ENCODE measurements at regions of chr19 and their contacts with region 1.

Region 1: GRCh38 chr19:18007044-18007916 is 690 bp upstream of the ARRDC2 start:
- DNase-seq: peak in 1 of 2 experiments; percentile 75
- ATAC-seq: peak; percentile 93 to 94
- H3K4me3 ChIP-seq: no peak overlapping the region
- H3K27ac ChIP-seq: peak overlapping the region; percentile 62 to 76; a peak in 5 of 6 replicates
- H3K4me1 ChIP-seq: peaks cover 30% of the 10 kb centered on the region
- CTCF ChIP-seq: peak; percentile 87
- EP300 ChIP-seq: no peak
- POLR2A ChIP-seq: no peak
- RAD21 ChIP-seq: peak; percentile 90

Region 2: GRCh38 chr19:18023622-18024251 is 16.5 kb after region 1 on chr19:
- CTCF ChIA-PET with region 1: interaction called, 11 read pairs
- POLR2A ChIA-PET with region 1: interaction called, 4 read pairs
- DNase-seq: no peak
- ATAC-seq: no peak
- H3K4me3 ChIP-seq: no peak overlapping the region
- H3K27ac ChIP-seq: peak overlapping the region; percentile 37 to 91; a peak in 2 of 6 replicates
- H3K4me1 ChIP-seq: peaks cover 32% of the 10 kb centered on the region
- CTCF ChIP-seq: no peak
- EP300 ChIP-seq: no peak
- POLR2A ChIP-seq: no peak; the same call in 1 of the 2 replicates
- RAD21 ChIP-seq: no peak

Region 3: DNA sequence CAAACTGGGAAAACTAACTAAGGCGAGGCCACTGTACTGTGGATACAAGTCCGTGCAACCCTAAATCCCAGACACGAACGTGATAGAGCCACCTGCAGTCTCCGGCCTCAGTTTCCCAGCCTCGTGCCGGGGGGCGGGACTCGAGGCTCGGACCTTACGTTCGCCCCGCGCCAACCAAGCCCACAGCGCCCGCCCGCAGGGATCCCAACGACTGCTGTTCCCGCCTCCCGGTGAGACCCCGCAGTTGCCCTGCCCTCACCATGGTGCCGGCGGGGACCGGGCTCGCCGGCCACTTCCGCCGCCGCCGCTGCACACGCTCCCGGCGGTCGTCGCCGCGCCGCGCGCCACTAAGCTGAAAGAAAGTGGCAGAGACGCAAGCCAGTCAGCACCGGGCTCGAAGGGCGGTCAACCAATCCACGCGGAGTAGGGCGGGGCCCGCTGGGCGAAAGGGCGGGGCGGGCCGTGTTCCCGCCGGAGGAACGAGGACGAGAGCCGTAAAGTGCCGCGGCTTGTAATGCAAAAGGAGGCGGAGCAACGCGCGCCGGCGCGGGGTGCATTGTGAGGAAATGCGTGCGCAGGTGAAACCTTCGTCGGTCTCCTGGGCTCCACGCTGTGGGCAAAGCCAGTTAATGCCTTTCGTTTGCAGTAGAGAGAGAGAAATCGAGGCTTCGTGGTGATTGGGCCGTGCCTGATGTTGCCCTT is 315.6 kb after region 1 on chr19 and contains the start of gene LSM4:
- CTCF ChIA-PET with region 1: no interaction called
- POLR2A ChIA-PET with region 1: no interaction called
- DNase-seq: peak; percentile 94 to 97
- ATAC-seq: peak; percentile 97
- H3K4me3 ChIP-seq: peak within 1 kb of the TSS; percentile 60
- H3K27ac ChIP-seq: peak within 1 kb of the TSS; percentile 93
- H3K4me1 ChIP-seq: peaks cover 40% of the 10 kb centered on the region
- CTCF ChIP-seq: no peak
- EP300 ChIP-seq: no peak
- POLR2A ChIP-seq: peak; percentile 62
- RAD21 ChIP-seq: peak; percentile 21 to 33; a peak in 3 of 5 replicates
- polyA plus RNA-seq, gene LSM4: 106 and 154 TPM in 2 replicates